ENCODE measurements at regions of chr6 and their contacts with region 1.

Region 1: DNA sequence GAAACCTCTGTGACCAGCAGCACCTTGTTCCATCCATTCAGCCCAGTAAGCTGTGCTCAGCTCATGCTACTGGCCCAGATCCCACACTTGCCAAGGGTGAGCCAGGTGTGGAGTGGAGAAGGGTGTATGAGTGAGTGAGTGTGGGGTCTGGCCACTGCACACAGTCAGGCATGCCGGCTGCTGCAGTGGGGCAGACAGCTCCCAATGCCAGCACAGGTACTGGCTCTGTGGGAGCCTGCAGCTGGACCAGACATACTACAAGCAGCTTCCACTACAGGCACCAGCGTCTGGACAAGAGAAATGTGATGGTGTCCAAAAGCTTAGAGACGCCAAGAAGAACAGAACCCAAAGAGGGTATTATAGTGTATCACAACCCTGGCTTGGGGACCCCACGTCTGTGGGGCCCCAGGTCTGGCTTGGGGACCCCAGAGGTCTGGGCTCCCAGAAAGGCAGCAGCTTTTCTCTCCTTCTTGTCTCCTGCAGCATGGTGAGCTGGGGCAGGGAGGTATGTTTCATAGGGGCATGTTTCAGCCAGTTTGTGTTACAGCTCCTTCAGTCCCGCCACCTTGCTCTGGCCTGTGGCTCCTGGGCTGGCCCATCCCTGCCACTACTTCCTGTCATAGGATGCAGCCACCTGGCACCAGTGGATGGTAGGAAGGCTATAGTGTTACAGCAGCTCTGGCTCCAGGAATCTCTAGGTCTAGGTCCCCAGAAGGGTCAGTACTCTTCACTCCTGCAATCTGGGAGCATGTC is 152.4 kb upstream of the HSF2 start:
- DNase-seq: no peak
- H3K4me3 ChIP-seq: no peak overlapping the region
- CTCF ChIP-seq: no peak
- POLR2A ChIP-seq: no peak

Region 2: DNA sequence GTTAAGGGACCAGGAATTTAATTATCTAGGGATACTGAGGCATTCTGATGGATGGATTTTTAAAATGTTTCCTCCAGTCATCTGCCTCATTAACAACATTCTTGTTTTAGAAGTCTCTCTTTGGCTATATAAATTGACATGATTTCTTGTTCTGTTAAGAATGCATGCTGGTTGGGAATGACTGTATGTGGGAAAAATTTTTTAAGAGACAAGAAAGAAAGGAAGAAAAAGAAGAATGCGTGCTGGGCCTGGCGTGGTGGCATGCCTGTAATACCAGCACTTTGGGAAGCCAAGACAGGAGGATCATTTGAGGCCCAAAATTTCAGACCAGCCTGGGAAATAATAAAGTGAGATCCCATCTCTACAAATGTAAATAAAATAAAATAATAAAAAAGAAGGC is 608.1 kb before region 1 on chr6:
- intact Hi-C with region 1: loop called (anchors 5 kb)
- DNase-seq: no peak
- H3K4me3 ChIP-seq: no peak overlapping the region
- CTCF ChIP-seq: no peak
- POLR2A ChIP-seq: no peak